ENCODE measurements at regions of chr20 and their contacts with region 1.

Region 1: DNA sequence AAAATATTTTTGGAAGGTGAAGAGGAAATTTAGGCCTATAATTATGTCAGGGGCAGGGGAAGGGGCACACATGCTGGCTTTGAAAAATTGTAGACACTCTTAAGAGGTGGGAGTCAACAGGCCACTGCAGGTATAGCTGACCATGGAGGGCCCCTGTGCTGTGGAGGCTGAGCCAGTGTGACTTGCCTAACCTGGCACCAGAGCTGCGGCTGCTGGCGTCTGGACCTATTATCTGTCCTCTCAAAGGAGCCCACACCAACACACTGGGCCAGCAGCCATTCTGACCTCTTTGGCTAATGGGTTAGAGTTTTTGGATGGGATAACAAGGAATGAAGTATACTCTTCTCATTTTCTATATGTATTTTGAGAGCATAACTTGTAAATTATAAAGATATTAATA is 4.5 kb downstream of the GID8 start:
- DNase-seq: peak; percentile 52
- ATAC-seq: no peak

Region 2: GRCh38 chr20:62982124-62983075 is 39.9 kb after region 1 on chr20:
- intact Hi-C with region 1: loop called (anchors 1 kb)
- DNase-seq: no peak
- ATAC-seq: no peak

Measured in sciatic nerve (tissue), 2 donors.